ENCODE measurements at regions of chr10 and their contacts with region 1.

Region 1: DNA sequence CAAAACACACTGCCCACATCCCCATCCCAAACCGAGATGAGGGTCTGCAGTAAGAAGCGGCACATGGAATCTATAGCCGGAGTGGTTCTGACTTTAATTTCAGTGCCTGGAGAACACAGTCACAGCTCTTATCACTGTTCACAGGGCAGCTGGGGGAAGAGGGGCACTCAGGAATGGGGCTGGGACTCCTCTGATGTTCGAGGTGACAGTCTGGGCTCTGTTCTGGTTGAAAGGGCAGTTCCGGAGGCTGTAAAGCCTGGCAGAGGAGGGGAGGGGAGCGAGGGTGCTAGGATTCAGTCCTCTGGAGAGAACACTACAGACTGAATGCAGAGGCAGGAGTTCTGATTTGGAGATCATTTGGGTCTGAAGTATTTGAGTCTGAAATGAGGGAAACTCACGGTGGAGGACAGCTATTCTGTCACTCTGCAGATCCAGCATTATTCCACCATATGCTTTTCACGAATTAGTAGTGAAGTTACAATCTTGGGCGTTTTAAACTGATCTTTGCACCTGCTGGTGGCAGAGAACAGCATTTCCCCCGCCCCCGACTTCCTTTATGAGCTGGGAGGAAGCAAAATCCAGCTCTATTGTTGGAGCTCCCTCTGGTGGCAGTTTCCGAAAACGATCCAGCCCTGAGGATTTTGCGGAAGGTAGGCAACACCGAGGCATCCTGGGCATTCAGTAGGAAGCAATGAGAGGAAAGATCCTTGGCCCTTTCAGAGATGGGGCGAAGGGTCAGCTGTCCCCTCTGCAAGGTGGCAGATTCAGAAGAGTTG is 22.7 kb upstream of the KCNK18 start:
- DNase-seq: peak; percentile 89

Region 2: DNA sequence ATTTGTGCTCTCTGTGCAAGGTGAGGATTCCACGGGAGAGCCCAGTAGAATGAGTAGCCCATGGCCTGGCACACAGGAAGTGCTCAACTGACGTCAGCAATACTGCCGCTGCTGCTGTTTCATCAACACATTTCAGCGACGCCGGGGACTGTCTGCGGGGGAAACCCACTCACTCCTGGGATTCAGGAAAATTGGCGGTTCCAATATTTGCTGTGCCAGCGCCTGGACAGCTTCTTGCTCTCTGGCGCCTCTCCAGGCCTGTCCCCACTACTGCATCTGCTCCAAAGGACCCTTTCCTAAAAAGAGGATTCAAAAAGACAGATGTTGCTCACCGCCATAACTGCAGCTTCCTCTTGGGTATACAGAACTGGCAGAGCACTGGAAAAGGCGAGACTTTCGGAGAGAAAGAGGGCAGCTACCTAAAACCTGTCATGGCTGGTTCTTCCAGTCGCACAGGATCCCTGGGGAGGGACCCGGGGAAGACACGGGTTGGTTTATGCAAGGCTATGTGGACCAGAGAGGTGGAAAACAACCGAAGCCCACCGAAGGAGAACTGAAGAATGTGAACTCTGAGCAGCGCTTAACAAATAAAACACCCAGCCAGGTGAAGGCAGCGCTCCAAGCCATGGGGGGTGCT is 365.0 kb before region 1 on chr10:
- in situ Hi-C with region 1: loop called (anchors 25 kb)
- DNase-seq: no peak

Region 3: DNA sequence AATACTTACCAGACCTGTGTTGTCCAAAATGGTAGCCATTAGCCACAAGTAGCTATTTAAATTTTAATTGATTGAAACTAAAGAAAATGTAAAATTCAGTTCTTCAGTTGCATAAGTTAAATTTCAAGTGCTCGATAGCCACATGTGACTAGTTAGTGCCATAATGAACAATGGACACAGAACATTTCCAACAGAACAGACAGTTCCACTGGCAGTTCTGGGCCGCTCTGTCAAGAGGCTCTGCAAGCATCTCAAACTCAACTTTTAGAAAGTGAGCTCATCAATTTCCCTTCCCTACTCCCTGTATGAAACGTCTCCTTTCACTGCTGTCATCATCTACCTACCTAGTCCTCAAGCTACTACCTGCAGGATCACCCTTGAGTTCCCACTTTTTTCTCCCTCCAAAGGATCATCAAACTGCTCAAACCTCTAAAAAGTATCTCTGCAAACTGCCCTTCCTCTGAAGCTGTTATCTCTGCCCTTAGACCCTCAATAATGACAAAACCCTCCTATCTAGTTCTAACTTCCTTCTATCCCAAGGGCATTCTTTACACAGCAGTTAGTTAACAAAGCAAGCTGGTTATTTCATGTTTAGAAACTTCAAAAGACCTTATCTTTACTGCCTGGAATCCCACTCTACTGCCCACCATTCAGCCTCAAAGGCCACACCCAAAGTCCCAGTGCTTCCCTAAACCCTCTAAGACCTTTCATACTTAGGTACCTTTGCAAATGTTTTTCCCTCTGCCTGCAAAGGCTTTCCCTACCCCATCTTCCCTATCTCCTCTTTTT is 190.2 kb before region 1 on chr10:
- in situ Hi-C with region 1: no loop called
- DNase-seq: no peak